B cell (primary cell): ENCODE measurements at regions of chr15 and their contacts with region 1.

Region 1: DNA sequence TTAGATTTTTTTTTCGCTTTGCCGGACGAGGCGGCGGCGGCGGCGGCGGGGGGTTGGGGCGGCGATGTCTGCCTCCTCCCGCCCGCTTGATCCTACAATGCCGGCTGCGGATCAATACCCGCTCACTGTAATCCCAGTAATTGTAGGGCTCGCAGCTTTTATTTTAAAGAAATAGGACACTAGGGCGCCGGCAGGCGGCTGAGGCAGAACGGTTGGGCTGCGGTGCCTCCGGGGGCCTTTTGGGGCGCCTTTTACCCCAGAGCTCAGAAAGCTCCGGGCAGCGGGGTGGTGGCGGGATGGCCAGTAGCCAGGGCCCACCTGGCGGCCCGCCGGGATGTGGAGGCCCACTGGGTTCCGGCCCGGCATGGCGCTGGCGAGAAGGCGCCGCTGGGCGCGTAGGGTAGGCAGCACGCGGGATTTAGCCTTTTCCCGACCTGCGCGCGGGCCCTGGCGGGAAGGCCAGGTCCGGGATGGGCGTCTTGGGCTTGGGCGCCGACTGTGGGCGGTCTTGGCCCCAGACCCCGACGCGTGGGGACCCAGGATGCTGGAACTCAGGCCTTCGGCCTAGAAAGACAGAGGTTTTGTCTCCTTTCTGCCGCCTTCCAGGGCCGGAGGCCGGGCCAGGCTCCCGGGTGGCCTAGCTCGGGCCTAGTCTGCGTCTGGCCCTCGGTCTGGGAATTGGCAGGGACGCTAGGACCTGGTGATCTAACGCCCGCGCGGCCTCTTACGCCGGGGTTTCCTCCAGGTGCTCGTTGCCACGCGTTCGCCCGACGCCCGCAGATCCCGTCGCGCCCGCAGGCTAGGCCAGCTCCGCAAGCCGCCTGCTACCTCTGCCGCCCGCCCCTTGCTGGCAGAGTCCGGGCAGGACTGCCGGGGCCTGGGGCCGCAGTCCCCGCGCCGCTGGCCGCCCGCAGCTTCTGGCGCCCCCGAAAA is 15.5 kb upstream of the ONECUT1 start:
- DNase-seq: peak; percentile 61
- ATAC-seq: peak; percentile 40
- H3K4me3 ChIP-seq: peak overlapping the region in 4 of 5 experiments; percentile 25 to 64 (median 52)
- H3K4me3 Mint-ChIP-seq: peak overlapping the region; percentile 90
- H3K27ac ChIP-seq: no peak overlapping the region
- H3K27ac Mint-ChIP-seq: no peak overlapping the region
- H3K4me1 ChIP-seq: peaks cover 33 to 38% of the 10 kb centered on the region in 2 donors
- H3K4me1 Mint-ChIP-seq: peaks cover 20% of the 10 kb centered on the region
- H3K27me3 ChIP-seq: peaks cover 4 to 81% (median 72%) of the 10 kb centered on the region in 4 experiments
- H3K27me3 Mint-ChIP-seq: peaks cover 78% of the 10 kb centered on the region
- CTCF ChIP-seq: peak; percentile 43

Region 2: DNA sequence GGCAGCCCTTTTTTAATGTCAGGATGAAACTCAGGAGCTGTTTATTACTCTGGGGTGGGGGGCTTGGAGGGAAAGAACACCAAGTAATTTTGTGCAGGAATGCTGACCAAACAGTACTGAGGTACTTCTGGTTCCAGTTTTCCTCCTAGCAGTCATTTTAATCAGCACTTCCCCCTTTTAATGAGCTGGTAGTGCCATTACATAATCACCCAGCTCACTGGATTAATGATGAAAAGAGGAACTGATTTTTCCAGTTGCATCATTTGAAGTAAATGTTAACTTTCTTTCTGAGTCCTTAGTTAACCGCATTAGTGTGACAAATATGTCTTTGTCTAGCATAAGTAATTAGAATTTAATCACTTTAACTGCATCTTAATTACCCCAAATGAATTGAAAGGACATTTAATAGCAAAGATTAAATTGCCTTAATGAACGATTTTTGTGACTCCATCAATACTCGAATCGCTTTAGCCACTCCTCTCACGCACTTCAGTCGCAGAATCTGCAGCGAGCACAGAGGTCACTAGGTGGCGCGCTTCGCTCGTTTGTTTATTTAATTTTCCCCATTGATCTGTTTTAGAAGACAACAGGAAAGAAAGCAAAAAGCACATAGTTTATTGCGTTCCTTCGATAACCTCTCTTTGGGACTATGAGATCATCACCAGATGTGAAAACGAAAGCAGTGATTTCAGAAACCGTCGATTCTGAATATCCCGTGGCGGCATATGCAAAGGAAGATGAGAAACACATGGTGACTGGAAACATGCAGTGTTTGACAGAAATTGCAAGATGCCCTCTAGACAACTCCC is 25.2 kb before region 1 on chr15:
- CTCF ChIA-PET with region 1: interaction called, 4 read pairs
- POLR2A ChIA-PET with region 1: no interaction called
- intact Hi-C with region 1: loop called (anchors 2 kb)
- DNase-seq: peak; percentile 86
- ATAC-seq: peak; percentile 75
- H3K4me3 ChIP-seq: peak overlapping the region; percentile 6 to 53 (median 38)
- H3K4me3 Mint-ChIP-seq: peak overlapping the region; percentile 86
- H3K27ac ChIP-seq: peak overlapping the region in 1 of 2 donors; percentile 15
- H3K27ac Mint-ChIP-seq: peak overlapping the region; percentile 92
- H3K4me1 ChIP-seq: peaks cover 37 to 46% of the 10 kb centered on the region in 2 donors
- H3K4me1 Mint-ChIP-seq: peaks cover 28% of the 10 kb centered on the region
- H3K27me3 ChIP-seq: peaks cover 0 to 56% (median 48%) of the 10 kb centered on the region in 4 experiments
- H3K27me3 Mint-ChIP-seq: peaks cover 59% of the 10 kb centered on the region
- CTCF ChIP-seq: peak; percentile 92